Dendritic cell treated with granulocyte-macrophage colony-stimulating factor and Interleukin-4, amounts not matched to agents 40 ng/mL and 50 ng/mL, for 4 days (primary cell): ENCODE measurements at regions of chrX and their contacts with region 1.

Region 1: GRCh38 chrX:30612250-30612655 is 34.7 kb upstream of the TASL start:
- H3K4me3 Mint-ChIP-seq: peak overlapping the region; percentile 61
- H3K27ac Mint-ChIP-seq: peak overlapping the region; percentile 84
- H3K4me1 Mint-ChIP-seq: no peaks in the 10 kb centered on the region
- H3K27me3 Mint-ChIP-seq: no peaks in the 10 kb centered on the region

Region 2: DNA sequence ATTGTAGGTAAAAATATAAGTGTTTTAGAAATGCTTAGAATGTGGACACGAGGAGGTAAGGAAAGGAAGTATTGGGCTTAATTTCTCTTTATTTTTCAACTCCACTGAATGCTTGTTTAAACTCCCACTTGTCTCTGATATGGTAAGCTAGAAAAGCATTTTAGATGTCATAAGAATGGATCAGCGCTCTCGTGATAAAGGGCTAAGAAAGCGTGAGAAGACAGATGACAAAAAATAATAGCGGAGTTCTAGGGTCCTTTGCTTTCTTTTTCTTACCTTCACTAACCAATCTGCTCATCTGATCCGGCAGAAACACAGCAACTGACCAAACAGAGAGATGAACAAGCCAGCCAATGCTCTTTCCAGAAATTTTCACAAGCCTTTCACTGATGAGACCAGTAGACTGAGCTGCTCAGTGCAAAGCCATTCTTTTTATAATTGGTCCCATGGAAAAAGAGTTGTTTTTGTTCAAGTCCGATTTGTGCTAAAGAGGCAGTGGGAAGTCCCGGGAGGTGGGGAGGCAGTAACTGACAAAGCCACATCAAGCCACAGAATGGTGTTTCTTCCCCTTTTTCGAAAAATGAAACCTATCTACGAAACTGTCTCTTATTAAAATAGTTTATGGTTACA is 34.8 kb before region 1 on chrX and contains the start of gene TASL:
- intact Hi-C with region 1: loop called (anchors 2 kb)
- H3K4me3 Mint-ChIP-seq: peak within 1 kb of the TSS; percentile 80
- H3K27ac Mint-ChIP-seq: peak within 1 kb of the TSS; percentile 96
- H3K4me1 Mint-ChIP-seq: peaks cover 19% of the 10 kb centered on the region
- H3K27me3 Mint-ChIP-seq: no peaks in the 10 kb centered on the region

Region 3: DNA sequence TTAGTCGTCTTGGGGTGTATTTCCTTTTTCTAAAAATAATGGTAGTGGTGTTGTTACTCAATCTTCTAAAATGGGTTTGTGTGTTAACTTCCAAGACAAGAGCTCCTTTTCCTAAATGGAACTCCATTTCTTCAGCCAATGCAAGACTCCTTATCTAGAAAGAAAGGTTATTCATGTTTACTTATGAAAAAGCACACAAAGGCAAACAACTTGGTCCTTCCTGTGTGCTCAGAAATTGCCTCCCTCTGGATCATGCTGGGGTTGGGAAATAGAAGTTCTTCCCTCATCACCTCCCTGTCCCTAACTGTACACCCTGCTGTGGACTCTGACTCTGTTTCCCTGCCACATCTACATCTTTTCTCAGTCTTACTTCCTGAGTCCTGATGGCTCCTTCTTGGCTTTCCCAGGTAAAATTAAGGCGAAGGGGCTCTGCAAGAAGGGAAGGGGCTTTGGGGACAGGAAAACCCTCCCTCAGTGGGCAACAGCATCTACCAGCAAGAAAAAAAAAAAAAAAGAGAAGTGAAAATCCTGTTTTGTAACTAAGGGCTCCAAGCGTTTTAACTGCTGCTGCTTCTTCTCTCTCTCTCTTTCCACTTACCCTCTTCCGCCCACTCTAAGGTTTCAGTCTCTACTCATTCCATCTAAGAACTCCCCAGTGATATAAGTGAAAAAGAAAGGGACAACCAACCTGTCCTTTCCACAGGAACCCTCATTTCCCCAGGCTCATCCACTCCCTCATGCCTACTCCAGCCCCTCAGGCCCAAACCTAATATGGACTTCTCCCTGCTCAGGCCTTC is 14.8 kb before region 1 on chrX:
- intact Hi-C with region 1: loop called (anchors 2 kb)
- H3K4me3 Mint-ChIP-seq: peak overlapping the region; percentile 59
- H3K27ac Mint-ChIP-seq: peak overlapping the region; percentile 94
- H3K4me1 Mint-ChIP-seq: peaks cover 20% of the 10 kb centered on the region
- H3K27me3 Mint-ChIP-seq: no peaks in the 10 kb centered on the region